HEK293 (cell line): ENCODE measurements at regions of chr7 and their contacts with region 1.

Region 1: GRCh38 chr7:6323967-6324701 is 51.7 kb upstream of the CYTH3 start:
- H3K4me3 ChIP-seq: no peak overlapping the region
- H3K27ac ChIP-seq: no peak overlapping the region
- H3K4me1 ChIP-seq: no peaks in the 10 kb centered on the region
- CTCF ChIP-seq: no peak

Region 2: DNA sequence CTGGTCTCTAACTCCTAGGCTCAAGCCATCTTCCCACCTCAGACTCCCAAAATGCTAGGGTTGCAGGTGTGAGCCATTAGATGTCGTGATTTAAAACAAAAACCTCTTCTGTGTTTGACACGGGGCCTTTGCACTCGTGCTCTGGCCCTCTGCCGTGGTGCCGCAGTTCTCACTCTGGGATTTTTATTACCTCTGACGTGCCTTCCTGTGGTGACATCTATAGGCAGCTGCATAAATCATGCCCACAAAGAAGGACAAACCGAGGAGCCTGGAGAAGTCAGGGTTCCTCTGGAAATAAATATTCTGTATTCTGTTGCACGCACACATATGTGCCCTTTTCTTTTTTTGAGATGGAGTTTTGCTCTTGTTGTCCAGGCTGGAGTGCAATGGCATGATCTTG is 469.4 kb before region 1 on chr7:
- CTCF ChIA-PET with region 1: interaction called, 13 read pairs
- POLR2A ChIA-PET with region 1: no interaction called
- H3K4me3 ChIP-seq: no peak overlapping the region
- H3K27ac ChIP-seq: no peak overlapping the region
- H3K4me1 ChIP-seq: no peaks in the 10 kb centered on the region
- CTCF ChIP-seq: no peak

Region 3: DNA sequence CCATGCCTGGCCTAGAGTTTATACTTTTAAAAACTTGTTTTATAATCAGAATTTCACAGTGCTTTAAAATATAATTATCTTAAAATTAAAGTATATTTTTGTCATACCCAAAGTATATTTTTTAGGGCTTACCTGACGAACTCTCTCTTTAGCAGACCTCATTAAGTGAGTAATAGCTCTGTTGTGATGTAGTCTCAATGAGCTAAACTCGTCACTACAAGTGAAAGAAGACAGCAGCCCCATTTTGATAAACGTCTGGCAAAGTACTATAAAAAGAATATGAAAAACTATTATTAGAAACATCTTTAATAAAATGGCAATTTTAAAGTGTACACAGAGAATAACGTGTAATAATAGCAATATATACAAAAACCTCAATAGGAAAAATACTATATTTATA is 274.4 kb before region 1 on chr7:
- CTCF ChIA-PET with region 1: no interaction called
- POLR2A ChIA-PET with region 1: no interaction called
- H3K4me3 ChIP-seq: no peak overlapping the region
- H3K27ac ChIP-seq: no peak overlapping the region
- H3K4me1 ChIP-seq: no peaks in the 10 kb centered on the region
- CTCF ChIP-seq: no peak

Region 4: DNA sequence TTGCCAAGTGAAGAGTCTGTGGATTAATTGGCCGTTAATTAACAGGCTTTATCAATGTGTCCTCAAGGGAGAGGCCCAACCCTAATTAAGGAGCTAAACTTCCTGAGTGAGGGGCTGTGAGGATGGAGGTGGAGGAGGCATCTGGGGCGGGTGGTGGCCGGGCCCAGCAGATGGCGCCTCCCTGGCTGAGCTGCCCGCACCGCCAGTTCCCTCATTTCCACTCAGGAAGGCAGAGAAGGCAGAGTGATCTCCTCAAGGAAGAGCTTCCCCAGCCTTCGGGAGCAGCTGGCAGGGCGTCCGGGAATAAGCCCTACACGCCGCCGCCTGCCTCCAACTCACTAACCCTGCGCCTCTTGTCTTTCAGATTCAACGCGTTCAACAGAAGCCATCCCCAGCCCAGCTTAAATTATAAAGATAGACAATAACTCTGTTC is 163.9 kb before region 1 on chr7:
- CTCF ChIA-PET with region 1: interaction called, 24 read pairs
- POLR2A ChIA-PET with region 1: no interaction called
- H3K4me3 ChIP-seq: no peak overlapping the region
- H3K27ac ChIP-seq: no peak overlapping the region
- H3K4me1 ChIP-seq: no peaks in the 10 kb centered on the region
- CTCF ChIP-seq: peak; percentile 59

Region 5: DNA sequence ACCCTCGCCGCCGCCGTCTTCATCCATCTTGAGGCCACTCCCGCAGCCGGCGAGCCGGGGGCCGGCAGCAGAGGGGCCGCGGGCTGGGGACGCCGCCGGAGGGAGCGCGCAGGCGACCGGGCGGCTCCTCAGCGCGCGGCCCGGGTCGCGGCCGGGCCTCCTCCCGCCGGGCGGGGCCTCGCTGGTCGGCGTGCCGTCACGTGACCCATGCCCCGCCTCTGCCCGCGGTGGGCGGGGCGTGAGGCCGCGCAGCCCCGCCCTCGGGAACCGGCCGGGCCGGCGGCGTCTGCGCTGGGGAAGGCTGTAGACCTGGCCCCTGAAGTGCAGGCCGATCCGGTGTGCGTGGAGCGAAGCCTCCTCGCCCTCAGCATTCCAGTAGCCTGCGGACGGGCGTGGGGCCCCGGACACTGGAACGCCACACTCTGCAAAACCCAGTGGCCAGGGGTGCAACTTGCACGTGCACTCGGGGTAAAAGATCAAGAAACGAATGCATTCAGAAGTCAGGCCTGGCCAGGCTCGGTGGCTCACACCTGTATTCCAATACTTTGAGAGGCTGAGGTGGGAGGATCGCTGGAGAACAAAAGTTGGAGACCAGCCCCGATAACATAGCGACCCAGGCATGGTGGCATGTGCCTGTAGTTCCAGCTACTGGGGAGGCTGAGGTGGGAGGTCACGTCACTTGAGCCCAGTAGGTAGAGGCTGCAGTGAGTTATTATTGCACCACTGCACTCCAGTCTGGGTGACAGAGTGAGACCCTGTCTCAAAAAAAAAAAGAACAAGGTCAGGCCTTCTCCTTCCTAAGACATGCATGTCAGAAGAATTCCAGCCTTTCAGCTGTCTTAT is 51.4 kb before region 1 on chr7 and contains the start of gene CYTH3:
- CTCF ChIA-PET with region 1: interaction called, 10 read pairs
- POLR2A ChIA-PET with region 1: no interaction called
- H3K4me3 ChIP-seq: peak within 1 kb of the TSS; percentile 75
- H3K27ac ChIP-seq: peak within 1 kb of the TSS; percentile 47; the same call in 1 of the 2 replicates
- H3K4me1 ChIP-seq: peaks cover 8% of the 10 kb centered on the region
- CTCF ChIP-seq: no peak

Region 6: DNA sequence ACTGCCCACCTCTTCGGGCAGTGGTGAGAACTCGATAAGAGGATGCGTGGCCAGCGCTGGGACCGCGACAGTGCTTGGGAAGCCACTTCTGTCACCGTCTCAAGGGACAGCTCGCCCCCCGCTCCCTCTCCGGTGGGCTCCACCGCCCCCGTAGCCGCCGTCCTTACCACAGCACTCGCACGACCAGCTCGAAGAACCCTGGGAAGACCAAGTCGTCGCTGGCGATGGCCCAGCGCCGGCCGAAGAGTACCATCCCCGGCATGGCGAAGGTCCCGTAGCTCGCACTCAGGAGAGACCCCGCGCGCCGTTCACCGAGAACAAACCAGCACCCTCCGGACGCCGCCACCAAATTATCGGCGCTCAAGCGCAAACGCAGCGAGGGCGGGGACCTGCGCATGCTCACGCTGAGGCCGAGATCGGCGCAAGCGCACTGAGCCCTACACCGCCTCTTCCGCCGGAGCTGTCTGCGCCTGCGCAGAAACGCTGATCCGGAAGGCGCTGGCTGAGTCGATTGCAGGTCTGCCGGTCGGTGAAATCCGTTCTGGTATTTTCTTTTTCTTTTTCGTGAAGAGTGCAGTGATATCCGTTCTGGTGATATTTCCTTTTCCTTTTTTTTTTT is 123.6 kb after region 1 on chr7 and contains the start of gene DAGLB:
- CTCF ChIA-PET with region 1: no interaction called
- POLR2A ChIA-PET with region 1: no interaction called
- H3K4me3 ChIP-seq: peak within 1 kb of the TSS; percentile 98
- H3K27ac ChIP-seq: peak within 1 kb of the TSS; percentile 64
- H3K4me1 ChIP-seq: no peaks in the 10 kb centered on the region
- CTCF ChIP-seq: no peak